ENCODE measurements at regions of chr1 and their contacts with region 1.

Region 1: GRCh38 chr1:175035865-175036264 is 12.6 kb upstream of the MRPS14 start:
- DNase-seq: no peak
- H3K4me3 ChIP-seq: no peak overlapping the region
- H3K4me1 ChIP-seq: no peaks in the 10 kb centered on the region
- H3K27me3 ChIP-seq: no peaks in the 10 kb centered on the region

Region 2: GRCh38 chr1:175146529-175147213 is 110.8 kb after region 1 on chr1:
- in situ Hi-C with region 1: loop called (anchors 10 kb)
- DNase-seq: peak; percentile 45 to 85
- H3K4me3 ChIP-seq: no peak overlapping the region
- H3K4me1 ChIP-seq: no peaks in the 10 kb centered on the region
- H3K27me3 ChIP-seq: peaks cover 18% of the 10 kb centered on the region; the same call in 1 of the 2 replicates

Measured in HAP-1 (cell line).